GM10248 (cell line): ENCODE measurements at regions of chr20 and their contacts with region 1.

Region 1: GRCh38 chr20:50504231-50504823 is 5.9 kb upstream of the PTPN1 start:
- DNase-seq: no peak
- CTCF ChIP-seq: peak; percentile 41

Region 2: DNA sequence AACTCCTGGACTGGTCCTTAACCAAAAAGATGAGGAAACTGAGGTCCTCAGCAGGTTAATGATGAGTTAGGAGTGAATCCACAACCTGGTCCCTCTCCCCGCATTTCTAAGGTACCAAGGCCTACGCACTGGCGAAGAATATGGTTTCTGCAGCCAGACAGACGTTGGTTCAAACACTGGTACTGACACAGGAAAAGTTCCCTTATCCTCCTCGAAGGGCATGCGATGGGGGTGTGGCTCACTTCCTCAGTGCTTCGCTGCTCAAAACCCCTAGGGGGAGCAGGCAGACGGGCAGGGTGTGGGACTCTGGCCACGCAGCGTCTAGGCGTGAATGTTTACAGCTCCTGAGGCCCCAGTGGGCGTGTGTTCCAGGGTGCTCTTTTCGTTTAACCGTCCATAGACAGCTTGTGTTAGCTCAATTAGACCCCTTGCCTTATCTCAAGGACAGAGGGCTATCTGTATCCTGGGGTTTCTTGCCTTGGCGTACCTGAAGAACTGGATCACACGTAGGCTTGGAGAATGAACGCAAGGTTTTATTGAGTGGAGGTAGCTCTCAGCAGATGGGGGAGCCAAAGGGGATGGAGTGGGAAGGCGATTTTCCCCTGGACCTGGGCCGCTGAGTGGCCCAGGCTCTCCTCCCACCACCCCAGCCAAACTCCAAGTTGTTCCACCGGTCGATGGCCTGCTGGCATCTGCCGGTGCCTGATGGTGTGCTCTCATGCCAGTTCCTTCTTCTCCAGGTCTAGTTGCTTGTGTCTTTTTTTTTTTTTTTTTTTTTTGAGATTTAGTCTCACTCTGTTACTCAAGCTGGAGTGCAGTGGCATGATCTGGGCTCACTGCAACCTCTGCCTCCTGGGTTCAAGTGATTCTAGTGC is 25.9 kb before region 1 on chr20:
- CTCF ChIA-PET with region 1: interaction called, 20 read pairs
- POLR2A ChIA-PET with region 1: no interaction called
- DNase-seq: peak; percentile 70
- CTCF ChIP-seq: peak; percentile 55

Region 3: GRCh38 chr20:50491926-50492634 is 12.2 kb before region 1 on chr20:
- CTCF ChIA-PET with region 1: interaction called, 71 read pairs
- POLR2A ChIA-PET with region 1: no interaction called
- DNase-seq: no peak
- CTCF ChIP-seq: no peak

Region 4: DNA sequence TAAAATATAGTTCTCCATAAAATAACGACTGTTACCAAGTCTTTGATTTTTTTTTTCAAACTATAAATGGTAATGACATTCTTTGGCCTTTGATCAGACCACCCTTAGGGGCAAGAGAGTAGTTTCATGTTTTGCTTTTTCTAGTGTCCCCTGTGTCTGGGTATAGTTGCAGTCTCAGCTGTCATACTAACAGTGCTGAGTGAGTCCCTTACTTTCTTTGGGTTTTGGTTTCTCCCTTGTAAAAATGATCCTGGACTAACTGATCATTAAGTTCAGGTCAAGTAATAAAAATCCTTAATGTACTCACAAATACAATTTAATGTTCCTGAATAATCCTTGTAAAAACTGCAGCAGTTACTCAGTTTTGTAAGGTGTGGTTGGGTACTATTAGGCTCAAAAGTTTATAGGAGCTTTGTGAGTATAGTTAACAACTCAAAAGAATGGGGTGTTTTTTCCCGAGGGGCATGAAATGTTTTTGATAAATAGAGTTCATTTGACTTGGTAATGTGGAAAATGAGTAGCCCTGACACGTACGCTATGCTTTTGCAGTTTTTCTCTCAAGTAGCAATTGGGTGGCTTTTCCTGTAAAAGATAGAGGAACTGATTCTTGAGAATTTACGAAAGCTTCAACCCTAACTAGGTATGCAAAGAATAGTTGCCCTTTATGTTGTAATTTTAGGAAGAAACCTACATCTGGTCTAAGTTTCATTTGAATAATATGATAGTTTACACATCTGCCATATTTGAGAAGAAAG is 12.0 kb after region 1 on chr20:
- CTCF ChIA-PET with region 1: interaction called, 44 read pairs
- POLR2A ChIA-PET with region 1: interaction called, 4 read pairs
- DNase-seq: peak; percentile 34
- CTCF ChIP-seq: no peak